Posterior vena cava (tissue), 2 donors: ENCODE measurements at regions of chr16 and their contacts with region 1.

Region 1: DNA sequence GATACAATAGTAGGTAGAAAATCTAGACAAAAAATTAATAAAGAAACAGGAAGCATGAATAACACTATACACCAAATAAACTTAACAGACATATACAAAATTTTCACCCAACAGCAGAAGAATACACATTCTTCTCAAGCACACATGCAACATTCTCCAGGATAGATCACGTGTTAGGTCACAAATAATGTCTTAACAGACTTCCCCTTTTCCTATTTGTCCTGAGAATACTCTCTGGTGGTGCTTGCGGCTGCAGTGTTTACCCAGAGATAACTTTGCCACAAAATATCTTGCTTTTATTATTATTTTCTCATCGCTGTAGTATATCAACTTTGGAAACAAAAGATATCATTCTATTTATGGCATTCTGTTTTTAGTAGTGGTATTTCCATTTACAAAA is 40.6 kb upstream of the ZNF267 start:
- DNase-seq: no peak

Region 2: GRCh38 chr16:31142109-31143010 is 690.7 kb before region 1 on chr16:
- intact Hi-C with region 1: no loop called
- DNase-seq: peak; percentile 100

Region 3: DNA sequence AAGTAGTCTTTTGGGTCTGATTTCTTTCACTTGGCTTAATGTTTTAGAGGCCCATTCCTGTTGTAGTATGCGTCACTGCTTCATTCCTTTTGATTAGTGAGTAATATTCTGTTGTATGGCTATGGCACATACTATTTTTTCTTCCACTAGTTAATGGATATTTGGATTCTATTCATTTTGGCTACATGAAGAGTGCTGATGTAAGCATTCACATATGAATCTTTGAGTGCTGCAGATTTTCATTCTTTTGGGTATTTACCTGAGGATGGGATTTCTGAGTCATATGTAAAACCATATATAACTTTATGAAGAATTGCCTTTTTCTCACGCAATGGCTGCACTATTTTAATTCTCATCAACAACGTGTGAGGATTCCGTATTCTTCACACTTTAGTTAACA is 191.8 kb before region 1 on chr16:
- intact Hi-C with region 1: no loop called
- DNase-seq: no peak

Region 4: DNA sequence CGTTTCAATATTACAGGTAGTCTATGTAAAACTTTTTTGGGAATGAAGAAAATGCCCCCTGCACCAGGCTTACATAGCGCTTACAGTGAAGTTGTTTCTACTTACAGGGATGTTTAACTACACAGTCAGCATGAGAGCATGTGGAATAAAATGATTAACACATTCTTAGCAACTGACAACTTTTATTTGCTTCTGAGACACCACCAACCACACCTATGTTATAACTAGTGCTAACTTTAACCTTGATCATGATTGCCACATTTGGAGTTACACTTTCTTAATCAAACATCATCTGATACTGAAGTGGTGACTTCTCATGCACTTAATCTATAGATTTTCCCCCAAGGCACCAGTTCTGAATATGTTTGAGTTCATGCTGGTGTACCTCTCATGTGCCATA is 20.3 kb after region 1 on chr16:
- intact Hi-C with region 1: loop called in 1 of 2 experiments (anchors 1 kb)
- DNase-seq: no peak